T-cell (primary cell): ENCODE measurements at regions of chr6 and their contacts with region 1.

Region 1: GRCh38 chr6:143556529-143556928 is 45.0 kb upstream of the FUCA2 start:
- DNase-seq: no peak
- ATAC-seq: no peak
- H3K4me3 ChIP-seq: no peak overlapping the region
- H3K4me3 Mint-ChIP-seq: peak overlapping the region in 1 of 3 donors; percentile 5
- H3K27ac ChIP-seq: peak overlapping the region; percentile 39
- H3K27ac Mint-ChIP-seq: peak overlapping the region; percentile 35 to 79
- H3K4me1 ChIP-seq: peaks cover 26 to 27% of the 10 kb centered on the region in 2 experiments
- H3K4me1 Mint-ChIP-seq: peaks cover 53 to 85% (median 66%) of the 10 kb centered on the region in 3 donors
- H3K27me3 ChIP-seq: no peaks in the 10 kb centered on the region
- H3K27me3 Mint-ChIP-seq: no peaks in the 10 kb centered on the region

Region 2: DNA sequence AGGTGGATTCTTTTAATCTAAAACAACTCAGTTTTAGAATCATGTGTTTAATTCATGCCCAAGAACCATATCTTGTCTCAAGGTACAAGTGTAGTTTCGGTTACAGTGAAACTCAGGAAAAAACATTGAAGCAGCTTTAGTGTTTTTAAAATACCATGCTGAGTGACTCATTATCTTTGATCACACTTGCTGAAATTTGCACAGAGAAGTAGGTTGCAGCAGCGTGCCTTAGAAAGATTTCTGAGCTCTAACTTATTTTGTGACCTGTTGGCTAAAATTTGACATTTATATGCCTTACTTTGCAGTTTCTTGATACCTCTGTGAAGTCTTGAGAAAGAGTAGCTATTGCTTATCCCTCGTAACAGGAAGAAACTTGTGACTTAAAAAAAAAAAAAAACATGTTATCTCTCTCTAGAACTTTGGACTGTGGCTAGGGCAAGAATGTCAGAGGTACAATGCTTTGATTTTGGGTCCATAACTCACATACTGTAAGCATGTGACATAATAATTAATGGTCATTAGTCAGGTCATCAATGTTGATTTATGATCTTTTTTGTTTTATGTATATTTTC is 10.5 kb before region 1 on chr6:
- CTCF ChIA-PET with region 1: interaction called in 1 of 2 experiments, 4 read pairs
- POLR2A ChIA-PET with region 1: interaction called in 1 of 2 experiments, 11 read pairs
- DNase-seq: peak in 1 of 35 experiments; percentile 54
- ATAC-seq: peak; percentile 64 to 82 (median 75)
- H3K4me3 ChIP-seq: no peak overlapping the region
- H3K4me3 Mint-ChIP-seq: peak overlapping the region; percentile 52 to 77 (median 66)
- H3K27ac ChIP-seq: peak overlapping the region; percentile 78
- H3K27ac Mint-ChIP-seq: peak overlapping the region; percentile 97 to 98
- H3K4me1 ChIP-seq: peaks cover 18 to 66% of the 10 kb centered on the region in 2 experiments
- H3K4me1 Mint-ChIP-seq: peaks cover 79 to 94% (median 83%) of the 10 kb centered on the region in 3 donors
- H3K27me3 ChIP-seq: no peaks in the 10 kb centered on the region
- H3K27me3 Mint-ChIP-seq: no peaks in the 10 kb centered on the region